B cell (primary cell): ENCODE measurements at regions of chr19 and their contacts with region 1.

Region 1: GRCh38 chr19:1064661-1065605 is 2.0 kb upstream of the ARHGAP45 start:
- DNase-seq: peak; percentile 83
- ATAC-seq: peak; percentile 19
- H3K4me3 ChIP-seq: no peak overlapping the region
- H3K4me3 Mint-ChIP-seq: peak overlapping the region; percentile 79
- H3K27ac ChIP-seq: no peak overlapping the region
- H3K27ac Mint-ChIP-seq: peak overlapping the region; percentile 83
- H3K4me1 ChIP-seq: peaks cover 38 to 53% of the 10 kb centered on the region in 2 donors
- H3K4me1 Mint-ChIP-seq: peaks cover 33% of the 10 kb centered on the region
- H3K27me3 ChIP-seq: no peaks in the 10 kb centered on the region
- H3K27me3 Mint-ChIP-seq: no peaks in the 10 kb centered on the region
- CTCF ChIP-seq: peak; percentile 78

Region 2: DNA sequence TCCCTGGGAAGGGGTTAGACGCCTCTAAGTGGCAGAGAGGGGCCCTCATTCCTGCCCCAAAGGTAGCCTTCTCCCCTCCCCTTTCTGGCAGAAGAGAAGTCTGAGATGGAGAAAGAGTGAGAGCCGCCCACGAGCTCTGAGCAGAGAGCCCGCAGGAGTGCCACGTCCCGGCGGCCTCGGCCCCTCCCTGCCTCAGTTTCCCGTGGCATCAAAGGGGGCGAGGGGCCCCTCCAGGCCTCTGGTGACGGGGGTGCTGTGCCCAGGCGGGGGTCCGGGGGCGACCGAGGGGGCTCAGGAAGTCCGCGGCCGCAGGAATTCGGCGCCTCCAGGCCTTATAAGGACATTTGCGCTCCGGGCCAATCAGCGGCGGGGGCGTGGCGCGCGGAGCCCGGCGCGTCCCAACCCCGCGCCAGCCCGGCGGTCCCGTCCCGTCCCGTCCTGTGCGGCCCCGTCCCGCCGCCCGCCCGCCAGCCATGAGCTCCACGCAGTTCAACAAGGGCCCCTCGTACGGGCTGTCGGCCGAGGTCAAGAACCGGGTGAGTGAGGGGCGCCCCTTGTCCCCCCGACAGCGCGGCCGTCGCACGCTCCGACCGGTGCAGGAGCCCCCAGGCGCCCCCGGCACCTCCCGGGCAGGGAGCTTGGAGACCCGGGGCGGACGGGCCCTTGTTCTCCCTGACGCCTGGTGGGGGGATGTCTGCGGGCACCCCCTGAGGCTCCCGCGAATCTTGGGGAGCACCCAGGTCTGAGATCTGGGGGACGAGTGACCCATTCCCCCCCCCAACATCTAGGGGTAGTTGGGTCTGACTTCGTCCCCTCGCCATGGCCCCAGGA is 38.5 kb before region 1 on chr19 and contains the start of gene CNN2:
- CTCF ChIA-PET with region 1: interaction called, 11 read pairs
- POLR2A ChIA-PET with region 1: interaction called, 14 read pairs
- intact Hi-C with region 1: loop called (anchors 1 kb)
- DNase-seq: peak; percentile 81
- ATAC-seq: peak; percentile 57
- H3K4me3 ChIP-seq: peak within 1 kb of the TSS; percentile 60 to 99 (median 87)
- H3K4me3 Mint-ChIP-seq: peak within 1 kb of the TSS; percentile 94
- H3K27ac ChIP-seq: peak within 1 kb of the TSS; percentile 74 to 85
- H3K27ac Mint-ChIP-seq: peak within 1 kb of the TSS; percentile 91
- H3K4me1 ChIP-seq: peaks cover 16 to 37% of the 10 kb centered on the region in 2 donors
- H3K4me1 Mint-ChIP-seq: peaks cover 27% of the 10 kb centered on the region
- H3K27me3 ChIP-seq: no peaks in the 10 kb centered on the region
- H3K27me3 Mint-ChIP-seq: no peaks in the 10 kb centered on the region
- CTCF ChIP-seq: no peak
- total RNA-seq, gene CNN2: 186 and 198 TPM in 2 replicates

Region 3: GRCh38 chr19:1082172-1082927 is 17.4 kb after region 1 on chr19:
- CTCF ChIA-PET with region 1: interaction called, 56 read pairs
- POLR2A ChIA-PET with region 1: interaction called, 97 read pairs
- intact Hi-C with region 1: loop called (anchors 1 kb)
- DNase-seq: peak; percentile 77
- ATAC-seq: peak; percentile 67
- H3K4me3 ChIP-seq: no peak overlapping the region
- H3K4me3 Mint-ChIP-seq: peak overlapping the region; percentile 13
- H3K27ac ChIP-seq: peak overlapping the region; percentile 18 to 30
- H3K27ac Mint-ChIP-seq: peak overlapping the region; percentile 79
- H3K4me1 ChIP-seq: peaks cover 33 to 67% of the 10 kb centered on the region in 2 donors
- H3K4me1 Mint-ChIP-seq: peaks cover 34% of the 10 kb centered on the region
- H3K27me3 ChIP-seq: no peaks in the 10 kb centered on the region
- H3K27me3 Mint-ChIP-seq: no peaks in the 10 kb centered on the region
- CTCF ChIP-seq: no peak

Region 4: GRCh38 chr19:1087813-1088415 is 23.0 kb after region 1 on chr19:
- CTCF ChIA-PET with region 1: interaction called, 48 read pairs
- POLR2A ChIA-PET with region 1: interaction called, 97 read pairs
- intact Hi-C with region 1: loop called (anchors 2 kb)
- DNase-seq: peak; percentile 86
- ATAC-seq: peak; percentile 61
- H3K4me3 ChIP-seq: peak overlapping the region in 2 of 5 experiments; percentile 1 to 8
- H3K4me3 Mint-ChIP-seq: peak overlapping the region; percentile 69
- H3K27ac ChIP-seq: peak overlapping the region; percentile 29 to 82
- H3K27ac Mint-ChIP-seq: peak overlapping the region; percentile 91
- H3K4me1 ChIP-seq: peaks cover 34 to 42% of the 10 kb centered on the region in 2 donors
- H3K4me1 Mint-ChIP-seq: peaks cover 35% of the 10 kb centered on the region
- H3K27me3 ChIP-seq: no peaks in the 10 kb centered on the region
- H3K27me3 Mint-ChIP-seq: no peaks in the 10 kb centered on the region
- CTCF ChIP-seq: peak; percentile 15

Region 5: GRCh38 chr19:1094975-1095701 is 30.2 kb after region 1 on chr19 and contains the start of gene POLR2E:
- CTCF ChIA-PET with region 1: interaction called, 7 read pairs
- POLR2A ChIA-PET with region 1: interaction called, 97 read pairs
- intact Hi-C with region 1: loop called (anchors 5 kb)
- DNase-seq: peak; percentile 99
- ATAC-seq: peak; percentile 99
- H3K4me3 ChIP-seq: peak within 1 kb of the TSS; percentile 56 to 86 (median 74)
- H3K4me3 Mint-ChIP-seq: peak within 1 kb of the TSS; percentile 97
- H3K27ac ChIP-seq: peak within 1 kb of the TSS; percentile 27 to 70
- H3K27ac Mint-ChIP-seq: peak within 1 kb of the TSS; percentile 95
- H3K4me1 ChIP-seq: peaks cover 19 to 23% of the 10 kb centered on the region in 2 donors
- H3K4me1 Mint-ChIP-seq: peaks cover 35% of the 10 kb centered on the region
- H3K27me3 ChIP-seq: no peaks in the 10 kb centered on the region
- H3K27me3 Mint-ChIP-seq: no peaks in the 10 kb centered on the region
- CTCF ChIP-seq: no peak
- total RNA-seq, gene POLR2E: 103 and 106 TPM in 2 replicates